ENCODE measurements at regions of chr3 and their contacts with region 1.

Region 1: GRCh38 chr3:16264708-16265454 is at the starts of genes DPH3 and OXNAD1:
- DNase-seq: peak; percentile 100
- ATAC-seq: peak; percentile 97
- H3K4me3 ChIP-seq: peak within 1 kb of the TSS; percentile 80
- H3K27ac ChIP-seq: peak within 1 kb of the TSS; percentile 42
- H3K4me1 ChIP-seq: peaks cover 26% of the 10 kb centered on the region
- H3K27me3 ChIP-seq: no peaks in the 10 kb centered on the region
- CTCF ChIP-seq: no peak
- total RNA-seq, gene DPH3: 8.1 and 10.2 TPM in 2 replicates
- total RNA-seq, gene OXNAD1: 17.6 and 20.5 TPM in 2 replicates

Region 2: DNA sequence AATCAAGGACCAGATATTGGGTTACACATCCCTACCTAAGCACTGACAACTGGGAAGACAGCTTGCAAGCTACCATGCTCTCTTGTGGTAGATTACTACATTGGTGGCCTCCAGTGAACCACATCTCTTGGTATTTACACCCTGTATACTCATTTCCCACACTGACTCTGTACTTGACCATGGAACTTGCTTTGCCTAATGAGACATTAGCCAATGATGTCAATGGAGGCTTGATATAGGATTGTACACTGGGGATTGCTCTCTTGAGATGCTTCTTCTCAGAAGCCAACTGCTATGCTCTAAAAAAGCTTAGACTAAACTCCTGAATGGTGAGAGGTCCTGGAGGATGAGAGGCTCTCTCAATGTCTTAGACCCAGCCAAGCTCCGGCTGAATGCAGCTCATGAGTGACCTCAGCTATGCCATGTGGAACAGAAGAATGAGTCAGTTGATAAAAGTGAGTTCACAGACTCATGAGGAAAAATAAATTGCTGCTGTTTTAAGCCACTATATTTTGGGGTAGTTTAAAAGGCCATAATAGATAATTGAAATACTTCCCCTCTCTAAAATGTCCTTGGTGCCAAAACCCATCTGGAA is 151.9 kb before region 1 on chr3:
- CTCF ChIA-PET with region 1: no interaction called
- POLR2A ChIA-PET with region 1: no interaction called
- intact Hi-C with region 1: no loop called
- DNase-seq: peak; percentile 25
- ATAC-seq: peak; percentile 70
- H3K4me3 ChIP-seq: no peak overlapping the region
- H3K27ac ChIP-seq: peak overlapping the region; percentile 53
- H3K4me1 ChIP-seq: peaks cover 10% of the 10 kb centered on the region; the same call in 1 of the 2 replicates
- H3K27me3 ChIP-seq: no peaks in the 10 kb centered on the region
- CTCF ChIP-seq: no peak

Region 3: GRCh38 chr3:16240283-16241023 is 24.4 kb before region 1 on chr3:
- CTCF ChIA-PET with region 1: no interaction called
- POLR2A ChIA-PET with region 1: no interaction called
- intact Hi-C with region 1: no loop called
- DNase-seq: peak; percentile 88
- ATAC-seq: peak; percentile 75
- H3K4me3 ChIP-seq: no peak overlapping the region
- H3K27ac ChIP-seq: peak overlapping the region; percentile 12
- H3K4me1 ChIP-seq: peaks cover 33% of the 10 kb centered on the region
- H3K27me3 ChIP-seq: no peaks in the 10 kb centered on the region
- CTCF ChIP-seq: no peak

Region 4: GRCh38 chr3:16370872-16371740 is 106.2 kb after region 1 on chr3:
- CTCF ChIA-PET with region 1: no interaction called
- POLR2A ChIA-PET with region 1: no interaction called
- intact Hi-C with region 1: no loop called
- DNase-seq: no peak
- ATAC-seq: no peak
- H3K4me3 ChIP-seq: no peak overlapping the region
- H3K27ac ChIP-seq: no peak overlapping the region
- H3K4me1 ChIP-seq: 0 out of 2 replicates have a peak, but pooled peaks cover 5% of the 10 kb centered on the region
- H3K27me3 ChIP-seq: no peaks in the 10 kb centered on the region
- CTCF ChIP-seq: no peak

Region 5: GRCh38 chr3:16496408-16497222 is 231.7 kb after region 1 on chr3:
- CTCF ChIA-PET with region 1: no interaction called
- POLR2A ChIA-PET with region 1: interaction called, 24 read pairs
- intact Hi-C with region 1: no loop called
- DNase-seq: peak; percentile 87
- ATAC-seq: peak; percentile 85
- H3K4me3 ChIP-seq: no peak overlapping the region
- H3K27ac ChIP-seq: peak overlapping the region; percentile 20
- H3K4me1 ChIP-seq: peaks cover 5% of the 10 kb centered on the region; the same call in 1 of the 2 replicates
- H3K27me3 ChIP-seq: no peaks in the 10 kb centered on the region
- CTCF ChIP-seq: no peak

Region 6: DNA sequence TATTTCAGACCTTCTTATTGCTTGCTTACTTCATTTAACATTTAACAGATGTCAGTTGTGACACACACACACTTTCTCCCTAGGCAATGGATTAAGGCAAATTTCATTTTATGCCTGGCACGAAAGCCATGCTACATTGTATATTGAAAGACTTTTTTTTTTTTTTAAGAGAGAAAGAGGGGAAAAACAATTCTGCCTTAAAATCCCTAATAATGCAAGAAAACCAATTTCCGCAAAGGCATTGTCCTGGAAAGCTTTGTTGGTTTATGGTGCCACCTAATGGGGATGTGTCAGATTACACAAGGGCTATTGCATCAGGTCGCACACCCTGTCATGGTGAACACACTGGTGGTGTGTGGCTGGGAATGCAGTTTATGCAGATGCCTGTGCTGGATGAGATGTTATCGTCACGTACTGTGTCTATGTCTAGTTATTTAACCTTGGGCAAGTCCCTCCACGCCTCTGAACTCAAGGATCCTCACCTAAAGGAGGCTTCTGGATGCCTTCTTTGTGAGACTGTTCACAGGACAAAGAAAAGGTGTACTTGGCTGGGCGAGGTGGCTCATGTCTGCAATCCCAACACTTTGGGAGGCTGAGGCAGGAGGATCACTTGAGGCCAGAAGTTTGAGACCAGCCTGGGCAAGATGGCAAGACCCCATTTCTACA is 285.9 kb after region 1 on chr3:
- CTCF ChIA-PET with region 1: no interaction called
- POLR2A ChIA-PET with region 1: no interaction called
- intact Hi-C with region 1: loop called (anchors 1 kb)
- DNase-seq: peak; percentile 92
- ATAC-seq: peak; percentile 95
- H3K4me3 ChIP-seq: peak overlapping the region; percentile 22; the same call in 1 of the 2 replicates
- H3K27ac ChIP-seq: no peak overlapping the region
- H3K4me1 ChIP-seq: peaks cover 8% of the 10 kb centered on the region
- H3K27me3 ChIP-seq: no peaks in the 10 kb centered on the region
- CTCF ChIP-seq: peak; percentile 95

Region 7: DNA sequence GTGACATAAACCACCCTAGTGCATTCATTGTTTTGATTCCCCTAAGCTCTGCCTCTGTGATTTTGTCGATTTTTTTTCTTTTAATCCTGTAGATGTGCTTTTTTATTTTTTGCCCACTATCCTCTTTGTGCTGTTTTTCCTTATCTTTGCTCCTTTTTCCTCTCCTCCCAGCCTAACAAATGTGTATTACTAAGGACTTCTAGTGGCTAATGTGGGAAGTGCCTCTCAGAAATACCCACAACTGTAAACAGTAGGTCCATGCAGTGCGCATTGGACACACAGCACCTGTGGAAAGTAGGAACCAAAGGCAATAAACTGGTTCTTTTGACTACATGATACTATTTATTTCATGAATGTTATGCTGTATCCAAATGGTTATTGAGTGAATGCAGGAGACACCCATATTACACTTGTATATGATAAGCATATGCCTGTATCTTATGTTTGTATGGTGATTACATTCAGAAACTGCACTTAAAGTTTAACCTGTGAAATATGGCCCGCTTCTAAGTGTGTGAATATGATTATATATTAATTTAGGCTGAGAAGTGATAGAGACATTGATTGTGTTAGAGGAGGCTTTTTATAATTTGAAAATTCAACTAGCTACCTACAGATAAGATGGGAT is 767.6 kb after region 1 on chr3:
- CTCF ChIA-PET with region 1: no interaction called
- POLR2A ChIA-PET with region 1: no interaction called
- intact Hi-C with region 1: loop called (anchors 10 kb)
- DNase-seq: peak; percentile 70
- ATAC-seq: peak; percentile 84
- H3K4me3 ChIP-seq: no peak overlapping the region
- H3K27ac ChIP-seq: no peak overlapping the region
- H3K4me1 ChIP-seq: peaks cover 15% of the 10 kb centered on the region
- H3K27me3 ChIP-seq: no peaks in the 10 kb centered on the region
- CTCF ChIP-seq: peak; percentile 95